PC-9 (cell line): ENCODE measurements at regions of chr2 and their contacts with region 1.

Region 1: DNA sequence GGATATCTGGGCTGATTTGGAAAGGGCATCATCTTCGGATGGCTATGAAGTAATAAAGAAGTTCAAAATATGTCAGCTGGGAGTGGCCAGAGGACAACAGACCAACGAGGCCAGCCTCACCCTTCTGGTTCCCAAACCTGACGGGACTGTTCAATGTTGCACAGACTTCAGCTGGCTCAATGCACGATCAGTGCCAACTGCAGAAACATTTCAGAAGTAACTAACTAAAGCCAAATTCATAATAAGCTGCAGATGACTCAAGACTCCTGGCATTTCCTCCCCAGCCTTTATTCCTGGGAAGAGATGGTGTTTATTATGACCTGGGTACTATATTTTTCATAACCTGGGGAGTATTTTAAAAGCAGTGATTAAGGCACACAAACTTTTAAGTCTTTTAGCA is 3.8 kb upstream of the ATP6V1C2 start:
- DNase-seq: peak; percentile 74 to 95
- H3K4me3 ChIP-seq: no peak overlapping the region; the same call in 1 of the 2 replicates
- H3K27ac ChIP-seq: peak overlapping the region; percentile 63
- H3K4me1 ChIP-seq: peaks cover 58% of the 10 kb centered on the region
- H3K27me3 ChIP-seq: peaks cover 21% of the 10 kb centered on the region
- CTCF ChIP-seq: no peak

Region 2: GRCh38 chr2:10812362-10813162 is 94.9 kb after region 1 on chr2 and contains the start of gene PDIA6:
- CTCF ChIA-PET with region 1: no interaction called
- POLR2A ChIA-PET with region 1: no interaction called
- intact Hi-C with region 1: loop called (anchors 1 kb)
- DNase-seq: peak; percentile 90 to 98
- H3K4me3 ChIP-seq: peak within 1 kb of the TSS; percentile 69
- H3K27ac ChIP-seq: peak within 1 kb of the TSS; percentile 81
- H3K4me1 ChIP-seq: peaks cover 19% of the 10 kb centered on the region
- H3K27me3 ChIP-seq: peaks cover 9% of the 10 kb centered on the region
- CTCF ChIP-seq: no peak
- total RNA-seq, gene PDIA6: 127 and 170 TPM in 2 replicates

Region 3: DNA sequence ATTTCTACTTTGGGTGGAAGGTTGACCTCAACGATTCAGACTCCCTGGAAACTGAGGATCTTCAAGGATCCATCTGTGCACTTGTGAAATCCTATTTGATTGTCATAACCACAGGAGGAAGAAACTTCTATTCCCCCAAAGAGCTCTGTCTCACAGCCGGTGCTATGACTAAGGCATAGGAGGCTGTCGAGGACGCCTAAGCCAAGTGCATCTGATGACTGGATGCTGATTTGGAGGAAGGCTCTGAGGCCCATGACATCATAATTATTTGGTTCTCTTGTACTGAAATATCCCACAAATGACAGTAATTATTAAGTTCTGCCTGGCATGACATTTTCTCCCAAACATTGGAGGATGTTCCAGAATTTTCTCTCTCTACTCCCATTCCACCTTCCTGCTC is 180.3 kb after region 1 on chr2:
- CTCF ChIA-PET with region 1: interaction called, 4 read pairs
- POLR2A ChIA-PET with region 1: no interaction called
- intact Hi-C with region 1: loop called (anchors 2 kb)
- DNase-seq: peak in 1 of 2 experiments; percentile 28
- H3K4me3 ChIP-seq: no peak overlapping the region
- H3K27ac ChIP-seq: no peak overlapping the region
- H3K4me1 ChIP-seq: peaks cover 27% of the 10 kb centered on the region
- H3K27me3 ChIP-seq: no peaks in the 10 kb centered on the region
- CTCF ChIP-seq: no peak

Region 4: GRCh38 chr2:11477994-11478393 is 760.4 kb after region 1 on chr2:
- CTCF ChIA-PET with region 1: interaction called, 11 read pairs
- POLR2A ChIA-PET with region 1: no interaction called
- intact Hi-C with region 1: no loop called
- DNase-seq: peak; percentile 53 to 72
- H3K4me3 ChIP-seq: no peak overlapping the region
- H3K27ac ChIP-seq: no peak overlapping the region
- H3K4me1 ChIP-seq: no peaks in the 10 kb centered on the region
- H3K27me3 ChIP-seq: no peaks in the 10 kb centered on the region
- CTCF ChIP-seq: peak; percentile 97